ENCODE measurements at regions of chr14 and their contacts with region 1.

Region 1: DNA sequence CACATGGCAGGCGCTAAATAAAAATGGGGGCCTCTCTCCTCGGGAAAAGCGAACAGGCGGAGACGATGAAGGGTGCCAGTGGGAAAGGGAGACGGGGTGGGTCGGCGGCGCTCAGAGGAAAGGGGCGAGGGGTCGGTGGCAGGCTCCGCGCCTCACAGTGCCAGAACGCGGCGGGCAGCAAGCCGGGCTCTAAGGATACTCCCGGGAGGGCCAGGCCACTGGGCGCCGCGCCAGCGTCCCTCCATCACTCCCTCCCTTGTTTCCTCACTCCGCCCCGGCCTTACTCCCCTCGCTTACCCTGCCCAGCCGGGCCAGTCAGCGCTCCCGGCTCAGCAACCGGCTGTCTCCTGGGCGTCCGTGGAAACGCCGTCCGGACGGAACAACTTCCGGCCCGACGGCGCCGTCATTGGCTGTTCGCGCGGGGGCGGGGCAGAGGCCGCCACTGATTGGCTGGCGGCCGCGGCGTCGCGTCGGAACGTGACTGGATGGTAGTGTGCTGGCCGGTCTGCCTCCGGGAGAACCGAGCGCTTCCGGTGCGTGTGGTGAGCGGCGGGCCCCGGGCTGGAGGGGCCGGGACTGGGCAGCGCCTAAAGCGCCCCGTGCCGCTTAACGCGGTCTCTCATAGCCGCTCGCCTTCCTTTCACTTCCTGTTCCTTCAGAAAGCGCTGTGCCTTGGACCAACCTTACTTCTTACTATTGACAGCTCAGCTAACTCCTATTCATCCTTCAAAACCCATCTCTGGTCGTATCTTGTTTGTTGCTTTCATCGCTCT is 53.0 kb downstream of the SLC25A47 start:
- DNase-seq: peak; percentile 93
- ATAC-seq: peak; percentile 81
- H3K4me3 Mint-ChIP-seq: peak within 1 kb of the TSS; percentile 95
- H3K27ac Mint-ChIP-seq: peak within 1 kb of the TSS; percentile 95
- H3K4me1 Mint-ChIP-seq: peaks cover 48% of the 10 kb centered on the region
- H3K27me3 Mint-ChIP-seq: no peaks in the 10 kb centered on the region
- CTCF ChIP-seq: no peak

Region 2: DNA sequence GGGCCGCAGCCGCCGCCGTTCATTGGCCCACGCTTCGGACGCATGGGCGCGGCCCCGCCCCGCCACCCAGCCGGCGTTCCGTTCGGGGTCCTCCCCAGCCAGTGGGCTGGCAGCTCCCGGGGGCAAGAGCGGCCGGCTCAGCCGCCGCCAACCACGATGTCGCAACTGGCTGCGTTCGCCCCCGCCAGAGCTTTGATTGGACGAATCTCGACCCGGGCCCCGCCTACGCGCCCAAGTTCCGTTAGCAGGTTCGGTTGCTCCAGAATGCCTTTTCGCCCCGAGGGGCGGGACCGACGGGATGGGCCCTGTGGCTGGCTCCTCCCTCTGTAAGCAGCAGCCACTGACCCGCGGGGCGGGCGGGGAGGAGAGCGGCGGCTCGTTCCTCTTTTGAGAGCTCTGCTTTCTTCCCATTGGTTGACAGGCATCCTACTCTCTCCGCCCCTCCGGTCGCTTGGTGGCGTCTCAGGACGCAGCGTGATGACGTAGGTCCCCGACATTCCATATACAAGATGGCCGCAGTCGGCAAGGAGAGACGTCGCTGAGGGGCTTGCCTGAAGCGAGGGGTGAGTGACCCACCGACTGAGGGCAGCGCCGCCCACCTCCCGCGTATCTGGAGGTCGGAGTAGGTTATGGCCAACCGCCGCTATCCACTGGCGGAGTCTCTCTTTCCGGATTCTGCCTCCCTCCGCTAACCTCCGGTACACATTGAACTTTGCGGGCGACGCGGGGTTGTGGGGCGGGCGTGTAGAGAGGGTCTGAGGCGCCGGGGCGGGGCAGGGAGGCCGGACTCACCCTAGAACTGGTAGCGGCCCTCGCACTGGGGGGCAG is 895.0 kb before region 1 on chr14 and contains the start of gene CCNK:
- CTCF ChIA-PET with region 1: no interaction called
- POLR2A ChIA-PET with region 1: no interaction called
- intact Hi-C with region 1: loop called (anchors 1 kb)
- DNase-seq: peak; percentile 99
- ATAC-seq: peak; percentile 87
- H3K4me3 Mint-ChIP-seq: peak within 1 kb of the TSS; percentile 97
- H3K27ac Mint-ChIP-seq: peak within 1 kb of the TSS; percentile 96
- H3K4me1 Mint-ChIP-seq: peaks cover 59% of the 10 kb centered on the region
- H3K27me3 Mint-ChIP-seq: no peaks in the 10 kb centered on the region
- CTCF ChIP-seq: no peak
- total RNA-seq, gene CCNK: 76.7 and 79.2 TPM in 2 replicates

Region 3: GRCh38 chr14:99982537-99983250 is 393.5 kb before region 1 on chr14:
- CTCF ChIA-PET with region 1: interaction called, 6 read pairs
- POLR2A ChIA-PET with region 1: no interaction called
- intact Hi-C with region 1: loop called (anchors 1 kb)
- DNase-seq: no peak
- ATAC-seq: peak; percentile 98
- H3K4me3 Mint-ChIP-seq: no peak overlapping the region
- H3K27ac Mint-ChIP-seq: no peak overlapping the region
- H3K4me1 Mint-ChIP-seq: no peaks in the 10 kb centered on the region
- H3K27me3 Mint-ChIP-seq: no peaks in the 10 kb centered on the region
- CTCF ChIP-seq: peak; percentile 88

Region 4: GRCh38 chr14:100108042-100108825 is 267.9 kb before region 1 on chr14:
- CTCF ChIA-PET with region 1: no interaction called
- POLR2A ChIA-PET with region 1: no interaction called
- intact Hi-C with region 1: loop called (anchors 1 kb)
- DNase-seq: peak; percentile 80
- ATAC-seq: peak; percentile 98
- H3K4me3 Mint-ChIP-seq: no peak overlapping the region
- H3K27ac Mint-ChIP-seq: peak overlapping the region; percentile 86
- H3K4me1 Mint-ChIP-seq: peaks cover 49% of the 10 kb centered on the region
- H3K27me3 Mint-ChIP-seq: no peaks in the 10 kb centered on the region
- CTCF ChIP-seq: peak; percentile 17

Region 5: GRCh38 chr14:100140452-100141078 is 235.6 kb before region 1 on chr14:
- CTCF ChIA-PET with region 1: no interaction called
- POLR2A ChIA-PET with region 1: no interaction called
- intact Hi-C with region 1: no loop called
- DNase-seq: no peak
- ATAC-seq: no peak
- H3K4me3 Mint-ChIP-seq: no peak overlapping the region
- H3K27ac Mint-ChIP-seq: no peak overlapping the region
- H3K4me1 Mint-ChIP-seq: peaks cover 3% of the 10 kb centered on the region
- H3K27me3 Mint-ChIP-seq: no peaks in the 10 kb centered on the region
- CTCF ChIP-seq: no peak

Region 6: GRCh38 chr14:100213956-100214774 is 162.0 kb before region 1 on chr14:
- CTCF ChIA-PET with region 1: no interaction called
- POLR2A ChIA-PET with region 1: no interaction called
- intact Hi-C with region 1: loop called (anchors 2 kb)
- DNase-seq: peak; percentile 91
- ATAC-seq: peak; percentile 96
- H3K4me3 Mint-ChIP-seq: peak overlapping the region; percentile 85
- H3K27ac Mint-ChIP-seq: peak overlapping the region; percentile 80
- H3K4me1 Mint-ChIP-seq: peaks cover 17% of the 10 kb centered on the region
- H3K27me3 Mint-ChIP-seq: no peaks in the 10 kb centered on the region
- CTCF ChIP-seq: no peak

Region 7: GRCh38 chr14:100271247-100271939 is 104.8 kb before region 1 on chr14:
- CTCF ChIA-PET with region 1: no interaction called
- POLR2A ChIA-PET with region 1: interaction called, 3 read pairs
- intact Hi-C with region 1: loop called (anchors 1 kb)
- DNase-seq: no peak
- ATAC-seq: no peak
- H3K4me3 Mint-ChIP-seq: no peak overlapping the region
- H3K27ac Mint-ChIP-seq: no peak overlapping the region
- H3K4me1 Mint-ChIP-seq: peaks cover 24% of the 10 kb centered on the region
- H3K27me3 Mint-ChIP-seq: no peaks in the 10 kb centered on the region
- CTCF ChIP-seq: no peak

Region 8: GRCh38 chr14:100306420-100307219 is 69.5 kb before region 1 on chr14 and contains the start of gene SLC25A29:
- CTCF ChIA-PET with region 1: no interaction called
- POLR2A ChIA-PET with region 1: interaction called, 5 read pairs
- intact Hi-C with region 1: loop called (anchors 1 kb)
- DNase-seq: peak; percentile 86
- ATAC-seq: peak; percentile 93
- H3K4me3 Mint-ChIP-seq: peak within 1 kb of the TSS; percentile 87
- H3K27ac Mint-ChIP-seq: peak within 1 kb of the TSS; percentile 66
- H3K4me1 Mint-ChIP-seq: peaks cover 21% of the 10 kb centered on the region
- H3K27me3 Mint-ChIP-seq: no peaks in the 10 kb centered on the region
- CTCF ChIP-seq: no peak
- total RNA-seq, gene SLC25A29: 20.6 and 28.8 TPM in 2 replicates

Region 9: DNA sequence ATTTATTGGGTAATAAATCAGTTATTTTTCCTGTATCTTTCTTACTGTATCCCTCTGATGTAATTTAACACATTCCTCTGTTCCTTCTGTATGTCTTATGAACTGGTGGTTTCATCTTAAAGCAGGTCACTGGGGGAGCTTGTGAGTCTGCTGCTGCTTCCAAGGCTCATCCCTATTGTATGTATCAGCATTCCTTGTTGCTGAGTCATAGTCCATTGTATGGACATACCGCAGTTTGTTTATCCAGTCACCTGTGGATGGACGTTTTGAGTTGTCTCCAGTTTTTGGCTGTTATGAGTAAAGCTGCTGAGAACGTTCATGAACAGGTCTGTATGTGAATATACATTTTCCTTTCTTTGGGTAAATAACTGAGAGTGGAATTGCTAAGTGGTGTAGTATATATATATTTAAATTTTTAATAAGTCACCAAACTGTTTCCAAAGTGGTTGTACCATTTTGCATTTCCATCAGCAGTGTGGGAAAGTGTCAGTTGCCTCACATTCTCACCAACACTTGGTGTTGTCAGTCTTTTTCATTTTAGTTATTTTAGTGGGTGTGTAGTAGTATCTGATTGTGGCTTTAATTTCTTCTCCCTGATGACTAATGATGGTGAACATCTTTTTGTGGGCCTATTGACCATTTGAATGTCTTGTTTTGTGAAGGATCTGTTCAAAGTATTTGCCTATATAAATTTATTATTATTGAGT is 128.4 kb after region 1 on chr14:
- CTCF ChIA-PET with region 1: no interaction called
- POLR2A ChIA-PET with region 1: no interaction called
- intact Hi-C with region 1: no loop called
- DNase-seq: no peak
- ATAC-seq: no peak
- H3K4me3 Mint-ChIP-seq: no peak overlapping the region
- H3K27ac Mint-ChIP-seq: no peak overlapping the region
- H3K4me1 Mint-ChIP-seq: peaks cover 2% of the 10 kb centered on the region
- H3K27me3 Mint-ChIP-seq: no peaks in the 10 kb centered on the region
- CTCF ChIP-seq: no peak

Region 10: GRCh38 chr14:100839681-100840111 is 463.5 kb after region 1 on chr14:
- CTCF ChIA-PET with region 1: no interaction called
- POLR2A ChIA-PET with region 1: no interaction called
- intact Hi-C with region 1: no loop called
- DNase-seq: no peak
- ATAC-seq: no peak
- H3K4me3 Mint-ChIP-seq: no peak overlapping the region
- H3K27ac Mint-ChIP-seq: no peak overlapping the region
- H3K4me1 Mint-ChIP-seq: no peaks in the 10 kb centered on the region
- H3K27me3 Mint-ChIP-seq: no peaks in the 10 kb centered on the region
- CTCF ChIP-seq: no peak